Common myeloid progenitor, CD34-positive (primary cell): ENCODE measurements at regions of chr7 and their contacts with region 1.

Region 1: GRCh38 chr7:77866786-77867536 is 68.4 kb downstream of the PHTF2 start:
- DNase-seq: no peak
- H3K4me3 ChIP-seq: no peak overlapping the region
- H3K27ac ChIP-seq: no peak overlapping the region
- H3K4me1 ChIP-seq: peaks cover 0 to 8% (median 0%) of the 10 kb centered on the region in 4 experiments
- H3K27me3 ChIP-seq: no peaks in the 10 kb centered on the region

Region 2: DNA sequence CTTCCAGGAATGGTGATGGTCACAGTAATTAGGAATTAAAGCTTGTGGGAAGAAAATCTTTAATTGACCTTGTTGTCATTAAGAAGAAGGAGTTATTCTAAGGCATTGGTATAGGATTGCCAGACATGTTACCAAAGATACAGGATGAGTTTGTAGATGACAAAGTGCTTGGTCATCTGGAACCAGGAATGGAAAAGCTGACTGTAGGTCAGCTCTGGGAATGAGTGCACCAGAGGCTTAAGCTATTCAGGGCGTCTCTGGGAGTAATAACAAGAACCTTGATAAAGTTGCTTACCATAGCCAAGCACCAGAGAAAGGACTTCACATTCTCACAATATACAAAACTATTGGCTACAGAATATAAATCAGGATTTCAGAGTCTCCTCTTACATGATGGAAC is 20.6 kb after region 1 on chr7:
- CTCF ChIA-PET with region 1: no interaction called
- POLR2A ChIA-PET with region 1: interaction called, 10 read pairs
- DNase-seq: no peak
- H3K4me3 ChIP-seq: no peak overlapping the region
- H3K27ac ChIP-seq: no peak overlapping the region
- H3K4me1 ChIP-seq: no peaks in the 10 kb centered on the region
- H3K27me3 ChIP-seq: no peaks in the 10 kb centered on the region

Region 3: GRCh38 chr7:77935652-77936348 is 68.8 kb after region 1 on chr7:
- CTCF ChIA-PET with region 1: no interaction called
- POLR2A ChIA-PET with region 1: no interaction called
- DNase-seq: peak in 2 of 3 donors; percentile 21 to 37
- H3K4me3 ChIP-seq: peak overlapping the region in 1 of 7 experiments; percentile 19
- H3K27ac ChIP-seq: no peak overlapping the region
- H3K4me1 ChIP-seq: peaks cover 0 to 7% (median 1%) of the 10 kb centered on the region in 4 experiments
- H3K27me3 ChIP-seq: no peaks in the 10 kb centered on the region